AG04449 (cell line): ENCODE measurements at regions of chr12 and their contacts with region 1.

Region 1: GRCh38 chr12:50074936-50075807 is 10.0 kb upstream of the SMARCD1 start:
- DNase-seq: no peak
- H3K4me3 ChIP-seq: no peak overlapping the region
- CTCF ChIP-seq: peak; percentile 89

Region 2: GRCh38 chr12:49776413-49776812 is 298.8 kb before region 1 on chr12:
- CTCF ChIA-PET with region 1: interaction called, 17 read pairs
- POLR2A ChIA-PET with region 1: no interaction called
- DNase-seq: no peak
- H3K4me3 ChIP-seq: no peak overlapping the region
- CTCF ChIP-seq: peak; percentile 83

Region 3: GRCh38 chr12:49959570-49960465 is 115.4 kb before region 1 on chr12:
- CTCF ChIA-PET with region 1: interaction called, 1,042 read pairs
- POLR2A ChIA-PET with region 1: no interaction called
- DNase-seq: no peak
- H3K4me3 ChIP-seq: no peak overlapping the region
- CTCF ChIP-seq: no peak

Region 4: GRCh38 chr12:50016501-50017475 is 58.4 kb before region 1 on chr12:
- CTCF ChIA-PET with region 1: interaction called, 13 read pairs
- POLR2A ChIA-PET with region 1: no interaction called
- DNase-seq: no peak
- H3K4me3 ChIP-seq: no peak overlapping the region
- CTCF ChIP-seq: no peak

Region 5: DNA sequence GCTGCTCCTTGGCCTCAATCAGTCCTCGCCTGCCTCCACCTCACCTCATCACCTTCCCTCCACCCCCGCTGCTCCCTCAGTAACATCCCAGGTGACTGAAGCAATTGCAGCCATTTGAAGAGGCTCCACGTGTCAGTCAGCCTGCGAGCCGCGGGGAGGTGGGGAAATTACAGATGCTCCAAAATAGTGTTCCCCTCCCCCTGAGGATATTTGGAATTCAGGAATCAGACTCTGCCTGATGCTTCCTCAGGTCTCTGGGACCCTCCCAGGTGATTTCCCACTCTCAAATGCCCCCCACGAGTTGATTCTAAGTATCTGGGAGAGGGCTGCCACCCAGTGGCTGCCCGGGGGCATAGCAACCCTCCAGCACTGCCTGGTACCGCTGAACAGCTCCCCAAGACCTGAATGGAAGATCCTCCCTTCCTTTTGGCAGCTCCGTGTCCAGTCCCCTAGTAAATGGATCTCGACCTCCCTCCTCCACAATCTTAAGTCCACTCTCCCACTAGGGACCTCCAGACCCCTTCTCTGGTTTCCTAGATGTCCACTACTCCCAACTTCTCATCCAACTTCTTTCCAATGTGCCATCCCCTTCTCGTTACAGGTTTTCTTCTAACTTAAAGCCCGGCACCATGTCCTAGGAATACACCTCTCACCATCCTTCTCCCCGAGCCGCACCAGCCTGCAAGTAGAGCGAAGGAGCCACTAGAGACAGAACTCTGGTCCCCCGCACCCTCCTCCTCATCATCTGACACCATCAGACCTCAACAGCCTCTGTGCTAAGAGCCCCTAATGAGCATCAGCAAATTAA is 19.1 kb before region 1 on chr12:
- CTCF ChIA-PET with region 1: interaction called, 96 read pairs
- POLR2A ChIA-PET with region 1: interaction called, 3 read pairs
- DNase-seq: no peak
- H3K4me3 ChIP-seq: peak overlapping the region; percentile 29
- CTCF ChIP-seq: peak; percentile 88

Region 6: DNA sequence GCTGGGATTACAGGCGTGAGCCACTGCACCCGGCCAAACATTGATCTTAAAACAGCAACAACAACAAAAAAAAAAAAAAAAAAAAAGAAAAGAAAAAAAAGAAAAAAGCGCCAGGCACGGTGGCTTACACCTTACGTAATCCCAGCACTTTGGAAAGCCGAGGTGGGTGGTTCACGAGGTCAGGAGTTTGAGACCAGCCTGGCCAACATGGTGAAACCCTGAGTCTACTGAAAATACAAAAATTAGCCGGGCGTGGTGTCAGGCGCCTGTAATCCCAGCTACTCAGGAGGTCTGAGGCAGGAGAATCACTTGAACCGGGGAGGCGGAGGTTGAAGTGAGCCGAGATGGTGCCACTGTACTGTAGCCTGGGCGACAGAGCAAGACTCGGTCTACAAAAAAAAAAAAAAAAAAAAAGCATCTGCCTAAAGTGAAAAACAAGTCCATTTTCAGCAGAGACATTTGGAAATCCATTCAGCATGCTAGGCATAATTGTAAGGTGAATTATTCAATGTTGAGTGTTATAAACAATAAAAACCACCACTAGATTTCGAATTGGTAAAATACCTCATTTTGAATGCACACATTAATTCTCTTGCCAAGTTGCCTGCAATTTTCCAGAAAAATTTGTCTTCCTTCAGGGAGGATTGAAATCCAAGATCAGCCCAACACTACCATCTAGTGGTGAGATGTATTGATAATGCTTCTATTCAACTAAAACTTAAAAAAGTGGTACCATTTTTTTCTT is 100.0 kb after region 1 on chr12:
- CTCF ChIA-PET with region 1: interaction called, 20 read pairs
- POLR2A ChIA-PET with region 1: no interaction called
- DNase-seq: no peak
- H3K4me3 ChIP-seq: no peak overlapping the region
- CTCF ChIP-seq: peak; percentile 2